ENCODE measurements at regions of chr4 and their contacts with region 1.

Region 1: GRCh38 chr4:101347557-101348366 is 436 bp upstream of the PPP3CA start:
- DNase-seq: peak; percentile 95 to 99 (median 98)
- ATAC-seq: peak; percentile 92
- H3K4me3 ChIP-seq: peak overlapping the region; percentile 99
- H3K4me3 Mint-ChIP-seq: peak overlapping the region; percentile 93 to 99 (median 98)
- H3K27ac ChIP-seq: peak overlapping the region; percentile 78
- H3K27ac Mint-ChIP-seq: peak overlapping the region; percentile 86 to 96 (median 93)
- H3K4me1 ChIP-seq: peaks cover 7 to 15% of the 10 kb centered on the region in 2 donors
- H3K4me1 Mint-ChIP-seq: peaks cover 23 to 40% (median 35%) of the 10 kb centered on the region in 7 donors
- H3K27me3 ChIP-seq: no peaks in the 10 kb centered on the region
- H3K27me3 Mint-ChIP-seq: peaks cover 5 to 63% (median 17%) of the 10 kb centered on the region in 5 donors

Region 2: DNA sequence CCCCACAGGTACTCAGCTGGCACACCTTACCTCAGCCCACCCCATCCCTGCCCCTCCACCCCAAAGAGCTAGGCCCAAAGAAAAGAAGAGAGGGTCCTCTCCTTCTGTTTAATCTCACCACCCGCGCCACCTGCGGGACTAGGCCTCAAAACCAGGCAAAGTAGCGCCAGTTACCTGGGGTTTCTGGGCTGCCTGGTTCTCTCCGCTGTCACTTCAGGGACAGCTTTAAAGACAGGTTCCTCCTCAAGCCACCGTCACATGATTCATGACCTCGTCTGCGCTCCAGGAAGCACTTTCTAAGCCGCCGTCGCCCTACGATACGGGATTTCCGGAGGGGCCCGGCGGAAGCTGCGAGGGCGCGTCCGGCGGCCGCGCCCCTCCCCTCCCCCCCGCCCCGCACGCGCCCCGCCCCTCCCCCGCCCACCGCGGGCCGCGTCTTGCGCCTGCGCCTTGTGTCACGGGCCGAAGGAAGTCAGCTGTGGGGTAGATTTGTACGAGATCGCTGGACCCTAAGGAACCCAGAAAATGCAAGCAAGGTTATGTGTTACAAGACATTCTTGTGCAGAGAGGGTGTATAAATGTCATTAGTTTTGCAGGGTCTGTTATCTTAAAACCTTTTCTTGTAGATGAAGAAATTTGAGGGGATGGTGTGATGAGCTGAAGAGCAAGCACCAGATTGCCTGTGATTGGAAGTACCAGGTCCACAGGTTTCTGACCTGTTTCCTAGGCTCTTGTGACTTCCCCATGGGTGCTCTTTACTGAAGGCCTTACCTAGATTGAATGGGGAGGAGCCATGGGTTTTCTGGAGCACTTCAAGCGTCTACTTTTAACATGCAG is 1453.4 kb before region 1 on chr4 and contains the start of gene LAMTOR3:
- CTCF ChIA-PET with region 1: no interaction called
- POLR2A ChIA-PET with region 1: no interaction called
- intact Hi-C with region 1: loop called in 1 of 2 experiments (anchors 5 kb)
- DNase-seq: peak; percentile 70 to 92 (median 89)
- ATAC-seq: peak; percentile 98
- H3K4me3 ChIP-seq: peak within 1 kb of the TSS; percentile 92
- H3K4me3 Mint-ChIP-seq: peak within 1 kb of the TSS; percentile 96 to 99 (median 98)
- H3K27ac ChIP-seq: peak within 1 kb of the TSS; percentile 96
- H3K27ac Mint-ChIP-seq: peak within 1 kb of the TSS; percentile 96 to 99 (median 98)
- H3K4me1 ChIP-seq: peaks cover 13 to 25% of the 10 kb centered on the region in 2 donors
- H3K4me1 Mint-ChIP-seq: peaks cover 25 to 55% (median 52%) of the 10 kb centered on the region in 7 donors
- H3K27me3 ChIP-seq: no peaks in the 10 kb centered on the region
- H3K27me3 Mint-ChIP-seq: no peaks in the 10 kb centered on the region
- total RNA-seq, gene LAMTOR3: 20.1 to 32.6 (median 27.4) TPM

Region 3: DNA sequence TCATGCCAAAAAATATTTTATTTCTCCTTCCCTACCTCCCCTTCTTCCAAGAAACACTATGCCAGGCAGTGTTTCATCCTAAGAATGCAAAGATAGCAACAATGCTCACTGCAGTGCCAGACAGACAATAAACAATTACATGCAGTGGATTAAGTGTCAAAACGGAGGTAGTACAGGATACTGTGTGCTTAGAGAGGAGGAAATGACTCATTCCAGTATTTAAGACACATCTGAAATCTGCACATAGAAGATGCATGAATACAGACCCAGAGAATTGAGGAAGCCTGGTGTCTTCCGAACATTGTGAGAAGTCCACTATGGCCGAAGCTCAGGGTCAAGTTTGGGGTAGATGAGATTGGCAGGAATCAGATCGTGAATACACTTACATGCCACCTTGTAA is 326.8 kb before region 1 on chr4:
- CTCF ChIA-PET with region 1: no interaction called
- POLR2A ChIA-PET with region 1: interaction called, 3 read pairs
- intact Hi-C with region 1: loop called (anchors 1 kb)
- DNase-seq: peak in 3 of 9 donors; percentile 3 to 10 (median 10)
- ATAC-seq: peak; percentile 82
- H3K4me3 ChIP-seq: peak overlapping the region; percentile 21
- H3K4me3 Mint-ChIP-seq: peak overlapping the region in 4 of 10 donors; percentile 3 to 76 (median 46)
- H3K27ac ChIP-seq: no peak overlapping the region
- H3K27ac Mint-ChIP-seq: peak overlapping the region; percentile 8 to 90 (median 59)
- H3K4me1 ChIP-seq: peaks cover 0 to 48% of the 10 kb centered on the region in 2 donors
- H3K4me1 Mint-ChIP-seq: peaks cover 21 to 55% (median 34%) of the 10 kb centered on the region in 7 donors
- H3K27me3 ChIP-seq: no peaks in the 10 kb centered on the region
- H3K27me3 Mint-ChIP-seq: no peaks in the 10 kb centered on the region

Region 4: GRCh38 chr4:101282076-101282844 is 65.5 kb before region 1 on chr4:
- CTCF ChIA-PET with region 1: no interaction called
- POLR2A ChIA-PET with region 1: no interaction called
- intact Hi-C with region 1: loop called (anchors 1 to 2 kb)
- DNase-seq: peak in 5 of 9 donors; percentile 5 to 45 (median 18)
- ATAC-seq: peak; percentile 55
- H3K4me3 ChIP-seq: no peak overlapping the region
- H3K4me3 Mint-ChIP-seq: peak overlapping the region in 4 of 10 donors; percentile 23 to 70 (median 58)
- H3K27ac ChIP-seq: no peak overlapping the region
- H3K27ac Mint-ChIP-seq: no peak overlapping the region
- H3K4me1 ChIP-seq: peaks cover 9 to 14% of the 10 kb centered on the region in 2 donors
- H3K4me1 Mint-ChIP-seq: peaks cover 24 to 78% (median 61%) of the 10 kb centered on the region in 7 donors
- H3K27me3 ChIP-seq: no peaks in the 10 kb centered on the region
- H3K27me3 Mint-ChIP-seq: no peaks in the 10 kb centered on the region

Region 5: DNA sequence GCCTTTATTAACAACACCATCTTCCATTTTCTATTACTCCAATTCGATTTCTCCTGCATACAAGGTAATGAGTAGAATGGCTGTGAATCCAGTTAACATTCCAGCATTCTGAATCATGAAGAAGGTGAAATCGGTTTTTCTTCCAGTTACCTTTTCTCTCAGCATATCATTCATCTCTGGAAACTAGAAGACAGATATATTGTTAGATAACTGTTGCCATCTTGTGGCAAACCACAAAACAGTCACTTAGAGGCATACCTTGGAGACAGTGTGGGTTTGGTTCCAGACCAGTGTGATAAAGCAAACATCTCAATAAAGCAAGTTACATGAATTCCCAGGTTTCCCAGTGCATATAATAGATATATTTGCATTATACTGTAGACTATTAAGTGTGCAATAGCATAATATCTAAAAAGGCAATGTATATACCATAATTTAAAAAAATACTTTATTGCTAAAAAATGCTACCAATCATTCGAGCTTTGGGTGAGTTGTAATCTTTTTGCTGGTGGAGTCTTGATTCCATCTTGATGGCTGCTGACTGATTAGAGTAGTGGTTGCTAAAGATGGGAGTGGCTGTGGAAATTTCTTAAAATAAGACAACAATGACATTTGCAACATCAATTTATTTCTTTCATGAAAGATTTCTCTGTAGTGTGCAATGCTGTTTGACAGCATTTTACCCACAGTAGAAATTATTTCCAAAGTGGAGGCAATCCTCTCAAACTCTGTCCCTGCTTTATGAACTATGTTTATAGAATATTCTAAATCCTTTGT is 915.4 kb after region 1 on chr4:
- CTCF ChIA-PET with region 1: no interaction called
- POLR2A ChIA-PET with region 1: no interaction called
- intact Hi-C with region 1: no loop called
- DNase-seq: peak in 5 of 9 donors; percentile 0 to 45 (median 14)
- ATAC-seq: peak; percentile 67
- H3K4me3 ChIP-seq: no peak overlapping the region
- H3K4me3 Mint-ChIP-seq: no peak overlapping the region
- H3K27ac ChIP-seq: no peak overlapping the region
- H3K27ac Mint-ChIP-seq: peak overlapping the region in 2 of 9 donors; percentile 7 to 69
- H3K4me1 ChIP-seq: no peaks in the 10 kb centered on the region
- H3K4me1 Mint-ChIP-seq: peaks cover 0 to 13% (median 4%) of the 10 kb centered on the region in 7 donors
- H3K27me3 ChIP-seq: no peaks in the 10 kb centered on the region
- H3K27me3 Mint-ChIP-seq: no peaks in the 10 kb centered on the region

Region 6: DNA sequence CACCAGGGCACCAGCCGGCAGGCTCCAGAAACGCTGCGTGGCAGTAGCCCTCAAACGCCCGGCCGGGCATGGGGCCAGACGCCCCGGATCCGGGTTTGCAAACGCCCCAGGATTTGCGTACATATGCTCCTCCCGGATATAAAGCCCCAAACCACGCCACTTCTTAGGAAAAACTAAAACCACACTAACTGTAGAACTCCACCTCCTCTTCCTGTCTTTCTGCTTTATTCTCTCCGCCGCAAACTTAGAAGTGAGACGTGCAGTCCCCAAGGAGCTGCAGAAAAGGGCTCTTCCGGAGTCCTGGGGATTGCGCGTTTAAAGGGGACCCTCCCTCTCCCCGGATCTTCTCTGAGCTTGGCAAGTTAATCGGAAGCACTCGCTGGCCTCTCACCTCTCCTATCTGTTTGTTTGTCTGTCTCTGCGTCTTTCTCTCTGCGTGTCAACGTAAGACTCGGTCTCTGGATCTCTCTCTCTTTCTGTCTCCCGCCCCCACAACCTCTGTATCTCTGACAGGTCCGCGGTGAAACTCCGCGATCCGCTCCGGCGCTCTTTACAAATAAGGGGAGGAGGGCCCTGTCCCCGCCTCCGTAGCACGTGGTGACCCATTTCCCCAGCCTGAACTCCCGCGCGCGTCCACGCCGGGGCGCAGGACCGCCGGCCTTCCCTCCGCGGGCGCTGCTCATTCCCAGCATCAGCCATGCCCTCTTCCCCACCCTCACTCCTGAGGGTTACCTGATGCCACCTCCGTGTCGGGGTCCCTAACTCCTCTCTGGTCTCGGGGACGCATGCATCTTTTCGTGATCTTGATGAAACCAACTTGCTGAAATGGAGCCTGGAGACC is 997.4 kb after region 1 on chr4 and contains the start of gene SLC39A8:
- CTCF ChIA-PET with region 1: no interaction called
- POLR2A ChIA-PET with region 1: no interaction called
- intact Hi-C with region 1: loop called (anchors 1 kb)
- DNase-seq: peak; percentile 75 to 91 (median 89)
- ATAC-seq: peak; percentile 87
- H3K4me3 ChIP-seq: peak within 1 kb of the TSS; percentile 87
- H3K4me3 Mint-ChIP-seq: peak within 1 kb of the TSS; percentile 87 to 97 (median 90)
- H3K27ac ChIP-seq: peak within 1 kb of the TSS; percentile 95
- H3K27ac Mint-ChIP-seq: peak within 1 kb of the TSS; percentile 91 to 98 (median 95)
- H3K4me1 ChIP-seq: peaks cover 15 to 37% of the 10 kb centered on the region in 2 donors
- H3K4me1 Mint-ChIP-seq: peaks cover 24 to 51% (median 46%) of the 10 kb centered on the region in 7 donors
- H3K27me3 ChIP-seq: no peaks in the 10 kb centered on the region
- H3K27me3 Mint-ChIP-seq: peaks cover 0 to 7% (median 0%) of the 10 kb centered on the region in 5 donors
- total RNA-seq, gene SLC39A8: 15.1 to 99.5 (median 17.8) TPM

Region 7: DNA sequence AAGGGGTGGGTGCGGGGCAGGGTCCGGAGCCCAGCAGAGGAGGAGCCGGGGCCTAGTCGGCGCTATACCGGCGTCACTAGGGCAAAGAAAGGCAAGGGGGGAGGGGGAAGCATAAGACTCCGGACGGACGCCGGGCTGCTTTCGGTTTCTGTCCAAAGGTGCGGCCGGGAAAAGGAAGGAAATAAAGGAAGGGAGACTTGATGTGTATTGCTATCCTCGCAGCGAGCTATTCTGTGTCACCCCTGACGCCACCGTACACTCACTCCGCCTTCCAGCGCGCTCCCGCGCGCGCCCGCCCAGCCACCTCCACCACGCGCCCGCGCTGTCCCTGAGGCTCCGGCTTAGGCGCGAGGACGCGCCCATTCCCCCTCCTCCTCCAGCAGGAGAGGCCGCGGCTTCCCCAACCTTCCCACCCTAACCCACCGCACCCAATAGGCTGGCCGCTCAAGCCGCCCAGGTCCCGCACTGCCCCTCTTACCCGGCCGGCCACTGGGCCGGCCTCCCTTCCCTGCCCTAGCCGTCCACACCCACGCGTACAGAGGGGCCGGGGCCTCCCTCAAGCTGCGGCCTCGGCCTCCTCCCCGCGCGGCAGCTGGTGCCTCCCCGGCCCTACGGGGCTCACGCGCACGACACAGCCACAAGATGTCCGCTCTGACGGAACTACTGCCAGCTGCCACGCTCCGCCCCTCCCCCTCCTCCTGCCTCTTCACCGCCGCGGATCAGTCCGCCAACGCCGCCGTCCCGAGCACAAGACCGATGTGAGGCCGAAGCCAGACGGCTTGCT is 1479.3 kb after region 1 on chr4 and contains the start of gene UBE2D3:
- CTCF ChIA-PET with region 1: no interaction called
- POLR2A ChIA-PET with region 1: no interaction called
- intact Hi-C with region 1: loop called in 1 of 2 experiments (anchors 1 kb)
- DNase-seq: peak; percentile 92 to 97 (median 95)
- ATAC-seq: peak; percentile 72
- H3K4me3 ChIP-seq: peak within 1 kb of the TSS; percentile 82
- H3K4me3 Mint-ChIP-seq: no peak within 1 kb of the TSS
- H3K27ac ChIP-seq: peak within 1 kb of the TSS; percentile 99
- H3K27ac Mint-ChIP-seq: no peak within 1 kb of the TSS
- H3K4me1 ChIP-seq: peaks cover 19 to 24% of the 10 kb centered on the region in 2 donors
- H3K4me1 Mint-ChIP-seq: peaks cover 24 to 46% (median 40%) of the 10 kb centered on the region in 7 donors
- H3K27me3 ChIP-seq: no peaks in the 10 kb centered on the region
- H3K27me3 Mint-ChIP-seq: peaks cover 0 to 2% (median 0%) of the 10 kb centered on the region in 5 donors
- total RNA-seq, gene UBE2D3: 339 to 556 (median 413) TPM

Region 8: DNA sequence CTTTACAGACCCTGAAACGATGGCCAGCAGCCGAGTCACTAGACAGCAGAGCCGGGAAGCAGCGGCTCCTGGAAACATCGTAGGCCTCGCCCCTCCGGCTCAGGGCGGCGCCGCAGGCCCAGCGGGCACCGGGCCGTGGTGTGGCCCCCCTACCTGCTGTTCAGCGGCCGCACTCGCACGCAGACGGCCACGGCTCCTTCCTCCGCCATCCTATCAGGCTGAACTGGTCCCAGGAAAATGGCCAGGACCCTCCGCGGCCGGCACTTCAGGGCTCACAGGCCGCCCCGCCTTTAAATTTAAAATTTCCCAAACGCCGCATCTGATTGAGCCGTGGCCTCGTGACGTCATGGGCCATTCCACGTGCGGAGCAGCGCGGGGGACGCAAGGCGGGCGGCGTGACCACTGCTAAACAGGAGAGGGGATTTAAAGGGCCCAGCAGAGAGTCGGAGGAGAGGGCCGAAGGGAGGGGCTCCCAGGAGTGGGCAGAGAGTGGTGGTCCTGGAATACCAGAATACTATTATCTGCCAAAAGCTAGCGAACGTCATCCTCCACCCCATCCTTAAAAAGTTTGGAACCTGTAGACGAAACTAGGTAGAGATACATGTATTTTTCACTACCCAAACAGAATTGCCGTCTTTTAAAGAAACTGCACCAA is 1850.5 kb after region 1 on chr4 and contains the start of gene CENPE:
- CTCF ChIA-PET with region 1: no interaction called
- POLR2A ChIA-PET with region 1: no interaction called
- intact Hi-C with region 1: loop called (anchors 5 to 10 kb)
- DNase-seq: peak; percentile 77 to 90 (median 87)
- ATAC-seq: peak; percentile 93
- H3K4me3 ChIP-seq: peak within 1 kb of the TSS; percentile 95
- H3K4me3 Mint-ChIP-seq: peak within 1 kb of the TSS; percentile 81 to 99 (median 96)
- H3K27ac ChIP-seq: peak within 1 kb of the TSS; percentile 91
- H3K27ac Mint-ChIP-seq: peak within 1 kb of the TSS; percentile 87 to 100 (median 99)
- H3K4me1 ChIP-seq: peaks cover 0 to 6% of the 10 kb centered on the region in 2 donors
- H3K4me1 Mint-ChIP-seq: peaks cover 6 to 29% (median 10%) of the 10 kb centered on the region in 7 donors
- H3K27me3 ChIP-seq: no peaks in the 10 kb centered on the region
- H3K27me3 Mint-ChIP-seq: peaks cover 0 to 21% (median 7%) of the 10 kb centered on the region in 5 donors
- total RNA-seq, gene CENPE: 1.1 to 35.8 (median 1.5) TPM

Measured in naive thymus-derived CD4-positive, alpha-beta T cell (primary cell).